Calu3 (cell line): ENCODE measurements at regions of chr3 and their contacts with region 1.

Region 1: GRCh38 chr3:140863580-140864009 is 78.0 kb upstream of the SLC25A36 start:
- DNase-seq: peak; percentile 84
- H3K4me3 Mint-ChIP-seq: no peak overlapping the region
- H3K27ac Mint-ChIP-seq: no peak overlapping the region
- H3K4me1 Mint-ChIP-seq: no peaks in the 10 kb centered on the region
- H3K27me3 Mint-ChIP-seq: peaks cover 57% of the 10 kb centered on the region
- CTCF ChIP-seq: peak; percentile 64

Region 2: DNA sequence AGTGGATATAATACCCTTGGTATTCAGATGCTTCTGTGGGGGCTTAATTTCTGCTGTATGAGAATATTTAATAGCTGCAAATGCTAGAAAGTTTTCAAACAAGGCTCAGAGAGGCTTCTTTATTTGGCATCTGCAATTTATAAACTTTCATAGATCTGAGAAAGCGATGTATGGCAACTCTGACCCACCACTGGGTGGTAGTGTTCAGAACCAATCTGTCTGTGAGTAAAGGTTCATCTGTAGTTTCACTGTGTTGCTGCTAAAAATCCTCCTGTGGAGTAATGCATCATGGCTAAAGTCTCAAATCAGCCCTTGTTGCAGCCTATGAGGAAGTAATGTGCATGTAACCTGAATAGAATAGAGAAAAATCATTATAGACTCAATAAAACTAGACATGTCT is 881.2 kb before region 1 on chr3:
- CTCF ChIA-PET with region 1: no interaction called
- intact Hi-C with region 1: loop called (anchors 5 kb)
- DNase-seq: no peak
- H3K4me3 Mint-ChIP-seq: no peak overlapping the region
- H3K27ac Mint-ChIP-seq: no peak overlapping the region
- H3K4me1 Mint-ChIP-seq: no peaks in the 10 kb centered on the region
- H3K27me3 Mint-ChIP-seq: peaks cover 32% of the 10 kb centered on the region
- CTCF ChIP-seq: no peak

Region 3: GRCh38 chr3:140363801-140364200 is 499.8 kb before region 1 on chr3:
- CTCF ChIA-PET with region 1: no interaction called
- intact Hi-C with region 1: loop called (anchors 5 kb)
- DNase-seq: peak; percentile 30
- H3K4me3 Mint-ChIP-seq: no peak overlapping the region
- H3K27ac Mint-ChIP-seq: no peak overlapping the region
- H3K4me1 Mint-ChIP-seq: no peaks in the 10 kb centered on the region
- H3K27me3 Mint-ChIP-seq: peaks cover 40% of the 10 kb centered on the region
- CTCF ChIP-seq: no peak

Region 4: DNA sequence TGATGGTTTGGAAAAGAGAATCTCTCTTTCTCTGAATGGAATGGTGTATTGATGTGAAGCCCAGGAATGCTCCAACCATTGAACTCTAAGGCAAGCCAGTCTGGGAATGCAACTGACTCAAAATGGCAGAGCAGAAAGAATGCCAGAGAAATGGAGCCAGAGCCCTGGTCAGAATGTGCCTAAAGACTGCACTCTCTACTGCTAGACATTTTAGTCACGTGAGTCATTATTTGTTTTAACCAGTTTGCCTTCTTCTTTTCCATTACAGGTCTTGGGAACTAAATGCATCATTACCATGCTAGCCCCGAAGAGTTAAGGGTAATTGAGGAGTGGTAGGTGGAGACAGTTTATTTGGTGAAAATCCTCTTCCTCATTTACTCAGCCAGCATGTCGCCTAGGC is 253.1 kb before region 1 on chr3:
- CTCF ChIA-PET with region 1: no interaction called
- intact Hi-C with region 1: loop called (anchors 5 kb)
- DNase-seq: no peak
- H3K4me3 Mint-ChIP-seq: no peak overlapping the region
- H3K27ac Mint-ChIP-seq: no peak overlapping the region
- H3K4me1 Mint-ChIP-seq: no peaks in the 10 kb centered on the region
- H3K27me3 Mint-ChIP-seq: peaks cover 39% of the 10 kb centered on the region
- CTCF ChIP-seq: no peak

Region 5: DNA sequence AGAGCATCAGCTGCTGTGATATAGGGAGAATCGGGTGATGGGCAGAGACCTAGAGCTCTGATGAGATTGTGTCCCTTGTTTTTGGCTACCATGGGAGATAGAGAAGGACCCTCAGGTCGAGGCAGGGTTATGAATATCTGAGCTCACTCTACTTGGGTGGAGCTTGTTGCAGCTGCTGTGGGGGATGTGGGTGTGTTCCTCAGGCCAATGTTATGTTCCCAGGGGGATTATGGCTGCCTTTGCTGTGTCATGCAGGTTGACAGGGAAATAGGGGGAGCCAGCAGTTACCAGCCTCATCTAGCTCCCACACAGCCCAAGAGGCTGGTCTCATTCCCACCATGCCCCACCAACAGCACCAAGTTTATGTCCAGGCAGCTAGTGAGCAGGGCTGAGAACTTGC is 54.3 kb before region 1 on chr3:
- CTCF ChIA-PET with region 1: no interaction called
- intact Hi-C with region 1: no loop called
- DNase-seq: no peak
- H3K4me3 Mint-ChIP-seq: no peak overlapping the region
- H3K27ac Mint-ChIP-seq: no peak overlapping the region
- H3K4me1 Mint-ChIP-seq: peaks cover 8% of the 10 kb centered on the region
- H3K27me3 Mint-ChIP-seq: no peaks in the 10 kb centered on the region
- CTCF ChIP-seq: no peak